ENCODE measurements at regions of chrX and their contacts with region 1.

Region 1: GRCh38 chrX:150365051-150365989 is 2.2 kb downstream of the MAMLD1 start:
- DNase-seq: peak; percentile 70
- H3K4me3 Mint-ChIP-seq: peak overlapping the region; percentile 75
- H3K27ac Mint-ChIP-seq: no peak overlapping the region
- H3K4me1 Mint-ChIP-seq: peaks cover 16% of the 10 kb centered on the region
- H3K27me3 Mint-ChIP-seq: peaks cover 13% of the 10 kb centered on the region

Region 2: GRCh38 chrX:149631234-149632165 is 733.8 kb before region 1 on chrX and contains the start of gene TMEM185A:
- CTCF ChIA-PET with region 1: no interaction called
- intact Hi-C with region 1: loop called (anchors 10 kb)
- DNase-seq: peak; percentile 75
- H3K4me3 Mint-ChIP-seq: peak within 1 kb of the TSS; percentile 87
- H3K27ac Mint-ChIP-seq: peak within 1 kb of the TSS; percentile 63
- H3K4me1 Mint-ChIP-seq: peaks cover 34% of the 10 kb centered on the region
- H3K27me3 Mint-ChIP-seq: no peaks in the 10 kb centered on the region
- total RNA-seq, gene TMEM185A: 7.2 to 7.5 TPM

Region 3: GRCh38 chrX:150200820-150201287 is 164.5 kb before region 1 on chrX:
- CTCF ChIA-PET with region 1: no interaction called
- intact Hi-C with region 1: loop called (anchors 2 kb)
- DNase-seq: peak; percentile 71
- H3K4me3 Mint-ChIP-seq: no peak overlapping the region
- H3K27ac Mint-ChIP-seq: no peak overlapping the region
- H3K4me1 Mint-ChIP-seq: peaks cover 5% of the 10 kb centered on the region
- H3K27me3 Mint-ChIP-seq: no peaks in the 10 kb centered on the region

Region 4: DNA sequence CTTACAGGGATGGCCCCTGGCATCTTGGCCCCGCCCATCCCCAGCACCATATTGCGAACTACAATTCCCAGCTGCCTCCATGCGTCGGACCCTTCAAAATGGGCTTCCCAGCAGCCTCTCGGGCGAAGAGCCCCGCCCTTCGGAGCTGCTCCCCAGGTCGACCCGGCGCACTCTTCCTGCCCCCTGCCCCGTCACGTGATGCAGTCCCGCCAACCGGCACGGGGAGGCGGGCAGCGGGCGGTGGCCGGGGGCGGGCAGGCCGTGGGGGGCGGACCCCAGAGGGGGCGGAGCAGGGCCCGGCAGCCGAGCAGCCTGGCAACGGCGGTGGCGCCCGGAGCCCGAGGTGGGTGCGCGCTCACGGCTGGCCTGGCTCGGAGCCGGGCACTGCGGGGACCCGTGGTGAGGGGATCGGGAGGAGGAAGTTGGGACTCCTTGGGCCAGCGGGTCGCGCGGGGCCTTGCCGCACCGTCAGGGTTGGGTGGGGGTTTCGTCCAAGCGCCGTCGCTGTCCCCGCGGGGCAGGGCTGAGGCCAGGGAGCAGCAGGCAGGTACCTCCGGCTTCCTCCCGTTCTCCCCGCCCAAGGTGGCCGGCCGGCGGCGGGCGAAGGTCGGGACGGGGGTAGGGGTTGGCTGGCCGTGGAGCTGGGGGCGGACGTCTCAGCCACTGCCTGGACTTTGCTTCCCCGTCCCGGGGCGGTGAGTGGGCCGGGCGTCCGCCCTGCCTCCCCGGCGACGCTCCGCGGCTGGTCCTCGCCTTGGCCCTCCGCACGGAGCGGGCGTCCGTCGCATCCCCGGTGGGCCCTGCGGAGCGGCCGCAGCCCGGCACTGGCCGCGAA is 203.2 kb after region 1 on chrX and contains the start of gene MTM1:
- CTCF ChIA-PET with region 1: no interaction called
- intact Hi-C with region 1: loop called (anchors 2 kb)
- DNase-seq: peak; percentile 93
- H3K4me3 Mint-ChIP-seq: peak within 1 kb of the TSS; percentile 78
- H3K27ac Mint-ChIP-seq: peak within 1 kb of the TSS; percentile 97
- H3K4me1 Mint-ChIP-seq: peaks cover 32% of the 10 kb centered on the region
- H3K27me3 Mint-ChIP-seq: no peaks in the 10 kb centered on the region
- total RNA-seq, gene MTM1: 17.8 to 19.2 TPM

Region 5: DNA sequence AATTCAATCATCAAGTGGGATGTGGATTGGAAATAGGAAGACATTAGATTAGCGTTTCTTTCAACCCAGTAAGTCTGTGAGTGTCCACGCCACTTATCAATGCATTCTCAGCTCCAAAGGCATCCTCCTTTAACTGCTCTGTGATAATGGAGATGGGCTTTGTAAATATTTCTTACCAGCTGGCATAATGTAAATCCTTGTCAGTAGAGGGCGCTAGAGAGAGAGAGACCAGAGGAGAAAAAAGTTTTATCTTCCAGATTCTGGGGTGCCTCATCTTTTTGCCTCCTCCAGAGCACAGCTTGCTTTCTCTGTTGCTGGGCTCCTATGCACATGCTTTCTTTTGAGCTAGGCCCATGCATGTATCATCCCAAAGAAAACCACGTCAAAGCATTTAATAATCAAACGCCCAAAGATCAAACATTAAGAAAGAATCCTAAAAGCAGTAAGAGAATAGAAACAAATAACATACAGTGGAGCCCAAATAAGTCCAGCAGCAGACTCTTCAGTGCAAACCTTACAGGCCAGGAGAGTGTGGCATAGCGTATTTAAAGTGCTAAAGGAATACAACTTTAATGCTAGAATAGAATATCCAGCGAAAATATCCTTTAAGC is 318.3 kb after region 1 on chrX:
- CTCF ChIA-PET with region 1: no interaction called
- intact Hi-C with region 1: loop called (anchors 5 kb)
- DNase-seq: no peak
- H3K4me3 Mint-ChIP-seq: no peak overlapping the region
- H3K27ac Mint-ChIP-seq: no peak overlapping the region
- H3K4me1 Mint-ChIP-seq: peaks cover 11% of the 10 kb centered on the region
- H3K27me3 Mint-ChIP-seq: no peaks in the 10 kb centered on the region

Region 6: GRCh38 chrX:150873616-150874015 is 508.3 kb after region 1 on chrX:
- CTCF ChIA-PET with region 1: no interaction called
- intact Hi-C with region 1: loop called (anchors 10 kb)
- DNase-seq: peak; percentile 46
- H3K4me3 Mint-ChIP-seq: no peak overlapping the region
- H3K27ac Mint-ChIP-seq: no peak overlapping the region
- H3K4me1 Mint-ChIP-seq: peaks cover 38% of the 10 kb centered on the region
- H3K27me3 Mint-ChIP-seq: no peaks in the 10 kb centered on the region